H1 (cell line): ENCODE measurements at regions of chr21 and their contacts with region 1.

Region 1: DNA sequence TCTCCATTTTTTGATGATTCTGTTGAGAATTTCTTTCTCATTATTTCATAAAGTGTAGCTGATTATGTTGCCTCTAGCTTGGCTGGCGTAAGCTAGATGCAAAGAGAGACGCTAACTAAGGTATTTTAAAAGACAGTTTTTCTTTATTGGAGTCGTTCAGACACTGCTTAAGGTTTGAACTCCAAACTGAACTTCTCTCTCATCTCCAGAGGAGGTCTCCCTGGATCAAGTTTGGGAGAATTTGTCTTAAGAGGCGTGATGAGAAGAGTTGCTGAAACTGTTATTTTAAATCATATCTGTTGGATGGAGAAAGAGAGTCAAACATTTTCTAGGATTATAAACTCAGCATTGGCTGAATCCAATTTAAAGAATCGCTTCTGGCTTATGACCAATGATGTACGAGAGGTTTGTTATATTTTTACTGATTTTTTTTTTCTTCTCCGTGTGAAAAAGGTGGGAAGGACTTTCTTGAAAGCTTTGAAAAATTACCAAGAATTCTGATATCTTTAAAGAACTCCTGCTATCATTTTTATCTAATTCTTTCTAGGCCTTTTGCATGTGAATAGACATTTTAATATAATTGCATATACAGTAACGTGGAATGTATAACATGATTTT is 34.0 kb downstream of the MAP3K7CL start:
- DNase-seq: no peak
- H3K4me3 ChIP-seq: no peak overlapping the region
- H3K27ac ChIP-seq: no peak overlapping the region
- H3K4me1 ChIP-seq: no peaks in the 10 kb centered on the region
- H3K27me3 ChIP-seq: no peaks in the 10 kb centered on the region
- CTCF ChIP-seq: peak in 2 of 3 experiments; percentile 49 to 56; a peak in 3 of 4 replicates
- EP300 ChIP-seq: no peak
- POLR2A ChIP-seq: no peak
- RAD21 ChIP-seq: peak; percentile 78 to 83

Region 2: DNA sequence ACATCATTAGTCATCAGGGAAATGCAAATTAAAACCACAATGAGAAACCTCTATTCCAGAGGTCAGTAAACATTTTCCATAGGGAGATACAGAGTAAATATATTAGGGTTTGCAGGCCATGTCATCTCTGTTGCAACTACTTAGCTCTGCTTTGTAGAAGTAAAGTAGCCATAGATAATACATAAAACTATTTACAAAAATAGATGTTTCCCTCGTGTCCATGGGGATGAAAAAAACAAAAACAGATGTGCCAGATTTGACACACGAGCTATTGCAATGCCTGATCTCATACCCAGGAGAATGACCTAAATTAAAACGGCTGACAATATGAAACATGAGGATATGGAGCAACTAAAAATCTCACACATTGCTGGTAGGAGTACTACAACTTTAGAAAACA is 189.0 kb before region 1 on chr21:
- CTCF ChIA-PET with region 1: no interaction called
- POLR2A ChIA-PET with region 1: no interaction called
- DNase-seq: no peak
- H3K4me3 ChIP-seq: no peak overlapping the region
- H3K27ac ChIP-seq: no peak overlapping the region
- H3K4me1 ChIP-seq: no peaks in the 10 kb centered on the region
- H3K27me3 ChIP-seq: no peaks in the 10 kb centered on the region
- CTCF ChIP-seq: no peak
- EP300 ChIP-seq: no peak
- POLR2A ChIP-seq: no peak
- RAD21 ChIP-seq: no peak

Region 3: DNA sequence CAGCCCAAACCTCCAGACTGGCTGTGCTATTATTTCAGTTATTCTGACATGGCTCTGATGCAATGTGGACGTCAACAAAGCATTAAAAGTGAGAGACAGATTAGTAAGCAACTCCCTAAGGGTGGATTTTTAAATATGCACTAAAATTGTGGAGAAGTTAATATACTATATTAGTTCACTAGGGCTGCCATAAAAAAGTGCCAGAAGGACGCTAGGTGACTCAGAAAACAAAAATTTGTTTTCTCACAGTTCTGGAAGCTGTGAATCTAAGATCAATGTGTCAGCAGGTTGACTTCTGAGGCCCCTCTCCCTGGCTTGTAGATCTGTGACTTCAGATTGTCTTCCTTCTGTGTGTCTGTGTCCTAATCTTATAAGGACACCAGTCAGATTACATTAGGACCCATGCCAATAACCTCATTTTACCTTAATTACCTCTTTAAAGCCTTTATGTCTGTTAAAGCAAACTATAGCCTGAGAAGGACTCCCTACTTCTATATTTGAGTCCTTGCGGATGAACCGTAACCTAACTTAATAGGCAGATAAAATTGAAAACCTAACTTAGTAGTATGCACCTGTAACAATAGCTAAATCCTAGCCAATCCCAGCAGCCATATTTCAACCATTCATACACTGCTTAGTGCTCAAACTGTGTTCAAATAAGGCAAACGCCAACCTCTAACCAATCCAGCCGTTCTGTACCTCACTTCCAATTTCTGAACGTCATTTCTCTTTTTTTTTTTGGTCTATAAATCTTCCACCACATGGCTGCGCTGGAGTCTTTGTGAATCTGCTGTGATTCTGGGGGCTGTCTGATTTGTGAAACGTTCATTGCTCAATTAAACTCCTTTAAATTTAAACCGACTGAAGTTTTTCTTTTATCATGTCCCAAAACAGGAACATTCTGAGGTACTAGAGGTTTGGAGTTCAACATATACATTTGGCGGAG is 68.4 kb after region 1 on chr21:
- CTCF ChIA-PET with region 1: no interaction called
- POLR2A ChIA-PET with region 1: no interaction called
- DNase-seq: no peak
- H3K4me3 ChIP-seq: no peak overlapping the region
- H3K27ac ChIP-seq: no peak overlapping the region
- H3K4me1 ChIP-seq: no peaks in the 10 kb centered on the region; a peak in 1 of 7 replicates
- H3K27me3 ChIP-seq: 0 out of 7 replicates have a peak, but pooled peaks cover 0 to 3% (median 0%) of the 10 kb centered on the region in 4 experiments
- CTCF ChIP-seq: no peak
- EP300 ChIP-seq: no peak
- POLR2A ChIP-seq: no peak
- RAD21 ChIP-seq: peak in 1 of 2 experiments; percentile 11; a peak in 1 of 4 replicates

Region 4: DNA sequence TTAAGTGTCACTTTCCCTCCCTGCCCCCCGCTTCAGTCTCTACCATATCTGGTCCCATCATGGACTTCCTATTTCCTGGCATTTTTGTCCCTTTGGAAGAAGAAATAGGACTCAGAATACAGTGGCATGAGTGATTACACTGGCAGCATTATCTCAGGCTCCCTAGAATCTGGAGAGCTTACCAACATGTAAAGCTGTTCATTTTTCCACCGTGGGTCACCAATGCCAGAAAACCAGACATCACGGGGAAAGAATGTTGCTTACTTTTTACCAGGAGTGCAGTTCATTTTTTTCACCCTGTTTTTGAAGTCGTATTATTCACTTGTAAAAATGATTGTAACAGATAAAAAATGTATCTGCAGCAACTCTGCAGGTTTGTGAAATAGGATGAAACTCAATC is 179.1 kb after region 1 on chr21:
- CTCF ChIA-PET with region 1: interaction called, 18 read pairs
- POLR2A ChIA-PET with region 1: no interaction called
- DNase-seq: no peak
- H3K4me3 ChIP-seq: no peak overlapping the region
- H3K27ac ChIP-seq: no peak overlapping the region
- H3K4me1 ChIP-seq: no peaks in the 10 kb centered on the region
- H3K27me3 ChIP-seq: no peaks in the 10 kb centered on the region
- CTCF ChIP-seq: no peak
- EP300 ChIP-seq: no peak
- POLR2A ChIP-seq: no peak
- RAD21 ChIP-seq: no peak